HEK293 (cell line): ENCODE measurements at regions of chr7 and their contacts with region 1.

Region 1: DNA sequence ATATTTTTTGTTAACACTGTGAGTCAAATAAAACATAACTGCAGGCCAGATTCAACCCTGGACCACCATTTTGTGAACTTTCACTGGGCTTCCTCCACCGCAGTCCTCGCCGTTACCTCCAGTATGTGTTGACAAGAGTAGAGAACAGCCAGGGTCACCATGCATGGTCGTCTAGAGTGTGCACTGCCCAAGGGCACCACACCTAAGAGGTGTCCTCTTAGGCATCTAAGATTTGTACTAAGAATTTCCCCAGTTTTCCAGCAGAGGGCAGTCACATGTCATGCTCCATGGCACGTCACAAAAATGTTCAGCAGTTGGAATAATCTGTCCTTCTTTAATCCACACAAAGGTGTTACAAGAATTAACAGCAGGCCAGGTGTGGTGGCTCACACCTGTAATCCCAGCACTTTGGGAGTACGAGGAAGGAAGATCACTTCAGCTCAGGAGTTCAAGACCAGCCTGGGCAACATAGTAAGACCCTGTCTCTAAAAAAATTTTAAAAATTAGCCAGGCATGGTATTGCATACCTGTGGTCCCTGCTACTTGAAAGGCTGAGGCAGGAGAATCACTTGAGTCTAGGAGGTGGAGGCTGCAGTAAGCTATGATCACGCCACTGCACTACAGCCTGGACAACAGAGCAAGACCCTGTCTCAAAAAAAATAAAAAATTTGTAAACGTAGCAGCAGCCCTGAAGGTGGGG is 71.2 kb upstream of the FOXK1 start:
- H3K4me3 ChIP-seq: no peak overlapping the region
- H3K27ac ChIP-seq: no peak overlapping the region
- H3K4me1 ChIP-seq: no peaks in the 10 kb centered on the region
- CTCF ChIP-seq: peak; percentile 28; the same call in 1 of the 2 replicates

Region 2: GRCh38 chr7:4631664-4632171 is 20.8 kb after region 1 on chr7:
- CTCF ChIA-PET with region 1: interaction called, 17 read pairs
- POLR2A ChIA-PET with region 1: no interaction called
- H3K4me3 ChIP-seq: no peak overlapping the region
- H3K27ac ChIP-seq: no peak overlapping the region
- H3K4me1 ChIP-seq: no peaks in the 10 kb centered on the region
- CTCF ChIP-seq: peak; percentile 80